GM13977 (cell line): ENCODE measurements at regions of chr20 and their contacts with region 1.

Region 1: DNA sequence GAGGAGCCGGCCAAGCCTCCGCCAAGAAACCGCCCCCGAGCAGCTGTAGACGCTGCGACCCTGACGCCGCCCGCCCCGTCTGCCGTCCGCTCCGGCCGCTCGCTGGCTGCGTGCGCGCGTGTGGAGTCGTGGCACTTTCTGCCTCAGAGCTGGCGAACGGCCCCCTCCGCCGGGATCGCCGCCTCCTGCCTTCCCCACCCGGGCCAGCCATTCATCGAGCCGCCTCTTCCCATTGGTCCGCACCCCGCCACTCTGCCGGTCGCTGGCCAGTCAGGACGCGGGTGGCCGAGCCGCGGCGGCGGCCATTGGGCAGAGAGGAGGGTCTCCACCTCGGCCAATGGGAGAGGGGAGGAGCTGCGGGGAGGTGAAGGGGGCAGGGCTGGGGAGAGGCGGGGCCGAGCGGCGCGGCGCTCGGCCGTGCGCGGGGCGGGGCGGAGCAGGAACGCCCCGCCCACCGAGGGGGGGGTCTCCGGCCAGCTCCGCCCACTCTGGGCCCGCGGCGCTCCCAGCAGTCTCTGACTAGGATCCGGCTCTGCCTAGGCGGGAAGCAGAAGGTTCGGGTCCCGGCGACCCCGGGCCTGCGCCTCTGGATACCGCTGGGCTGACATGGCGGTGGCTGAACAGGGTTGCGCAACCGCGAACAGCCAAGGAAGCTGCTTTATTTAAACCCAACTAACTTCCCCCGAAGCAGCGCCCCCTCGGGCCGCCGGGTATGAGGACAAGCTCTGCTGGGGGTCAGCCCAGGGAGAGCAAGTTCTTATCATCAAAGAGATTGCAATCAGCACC is at the start of gene RRBP1:
- DNase-seq: peak; percentile 100
- CTCF ChIP-seq: peak; percentile 81

Region 2: GRCh38 chr20:17442588-17442987 is 239.7 kb before region 1 on chr20:
- in situ Hi-C with region 1: no loop called
- DNase-seq: no peak
- CTCF ChIP-seq: no peak

Region 3: GRCh38 chr20:17898548-17898994 is 216.3 kb after region 1 on chr20:
- in situ Hi-C with region 1: loop called (anchors 25 kb)
- DNase-seq: peak; percentile 63
- CTCF ChIP-seq: peak; percentile 87

Region 4: GRCh38 chr20:17910828-17911294 is 228.6 kb after region 1 on chr20:
- in situ Hi-C with region 1: no loop called
- DNase-seq: no peak
- CTCF ChIP-seq: no peak